ENCODE measurements at regions of chr7 and their contacts with region 1.

Region 1: DNA sequence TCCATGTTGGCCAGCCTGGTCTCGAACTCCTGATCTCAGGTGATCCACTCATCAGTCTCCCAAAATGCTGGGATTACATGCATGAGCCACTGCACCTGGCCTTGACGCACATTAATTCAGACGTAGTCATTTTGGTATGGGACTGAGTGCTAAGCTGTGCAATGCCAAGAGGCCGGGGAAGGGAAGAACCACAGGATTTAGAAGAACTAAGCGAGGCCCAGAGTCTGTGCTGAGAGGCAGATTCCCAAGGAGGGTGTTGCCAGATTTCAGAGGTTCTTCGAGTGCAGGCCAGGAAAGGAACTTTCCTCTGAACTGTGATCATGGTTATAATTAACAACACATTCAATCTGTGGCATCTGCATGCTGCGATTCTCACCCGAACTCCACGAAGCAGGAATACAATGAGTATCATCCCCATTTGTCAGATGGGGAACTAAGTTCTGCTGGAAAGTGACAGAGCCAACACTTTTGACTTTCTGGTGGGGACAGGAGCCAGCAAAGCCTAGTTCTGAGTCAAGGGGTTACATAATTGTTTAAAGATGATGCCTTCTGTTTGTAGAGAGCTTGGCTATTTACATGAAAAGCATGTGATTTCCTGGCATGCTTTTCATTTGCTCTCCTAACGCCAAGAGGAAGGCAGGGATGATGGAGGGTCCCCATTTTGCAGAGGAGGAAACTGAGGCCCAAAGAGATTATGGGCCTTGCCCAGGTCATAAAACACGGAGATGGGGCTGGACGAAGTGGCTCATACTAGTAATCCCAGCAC is 6.2 kb upstream of the ZAN start:
- DNase-seq: no peak
- ATAC-seq: no peak

Region 2: DNA sequence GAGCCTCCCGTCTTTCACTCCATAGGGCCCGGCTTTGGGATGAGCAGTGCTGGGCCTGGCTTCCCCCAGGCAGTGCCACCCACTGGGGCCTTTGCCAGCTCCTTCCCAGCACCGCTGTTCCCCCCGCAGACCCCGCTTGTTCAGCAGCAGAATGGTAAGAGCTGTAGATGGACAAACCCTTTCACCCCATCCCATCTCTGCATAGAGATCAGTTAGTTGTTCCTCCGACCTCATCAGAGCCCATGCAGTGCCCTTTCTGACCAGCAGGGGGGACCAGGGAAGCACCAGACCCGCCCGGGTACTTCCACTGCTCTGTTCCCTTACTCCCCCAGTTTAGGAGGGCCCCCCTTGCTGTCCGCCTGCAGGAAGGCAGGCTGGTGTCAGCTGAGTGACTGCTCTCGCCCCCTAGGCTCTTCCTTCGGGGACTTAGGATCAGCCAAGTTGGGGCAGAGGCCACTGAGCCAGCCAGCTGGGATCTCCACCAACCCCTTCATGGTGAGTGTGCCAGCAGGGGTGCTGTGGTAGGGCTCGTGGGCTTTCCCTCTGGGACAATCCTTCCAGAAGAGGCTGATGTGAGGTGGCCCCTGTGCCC is 163.3 kb before region 1 on chr7:
- intact Hi-C with region 1: loop called (anchors 5 kb)
- DNase-seq: peak; percentile 90
- ATAC-seq: peak; percentile 58